ENCODE measurements at regions of chr3 and their contacts with region 1.

Region 1: GRCh38 chr3:152241142-152242017 is 27.3 kb upstream of the MBNL1 start:
- DNase-seq: peak; percentile 38
- ATAC-seq: no peak
- H3K4me3 ChIP-seq: peak overlapping the region in 1 of 5 experiments; percentile 30
- H3K4me3 Mint-ChIP-seq: peak overlapping the region; percentile 68
- H3K27ac ChIP-seq: peak overlapping the region; percentile 57 to 87
- H3K27ac Mint-ChIP-seq: peak overlapping the region; percentile 84
- H3K4me1 ChIP-seq: peaks cover 38 to 53% of the 10 kb centered on the region in 2 donors
- H3K4me1 Mint-ChIP-seq: peaks cover 68% of the 10 kb centered on the region
- H3K27me3 ChIP-seq: no peaks in the 10 kb centered on the region
- H3K27me3 Mint-ChIP-seq: no peaks in the 10 kb centered on the region
- CTCF ChIP-seq: no peak

Region 2: GRCh38 chr3:152193673-152194267 is 47.6 kb before region 1 on chr3:
- CTCF ChIA-PET with region 1: interaction called, 7 read pairs
- POLR2A ChIA-PET with region 1: interaction called, 21 read pairs
- intact Hi-C with region 1: loop called (anchors 2 kb)
- DNase-seq: peak; percentile 57
- ATAC-seq: peak; percentile 52
- H3K4me3 ChIP-seq: peak overlapping the region; percentile 13 to 73 (median 51)
- H3K4me3 Mint-ChIP-seq: peak overlapping the region; percentile 91
- H3K27ac ChIP-seq: peak overlapping the region; percentile 27 to 59
- H3K27ac Mint-ChIP-seq: peak overlapping the region; percentile 91
- H3K4me1 ChIP-seq: peaks cover 48 to 53% of the 10 kb centered on the region in 2 donors
- H3K4me1 Mint-ChIP-seq: peaks cover 66% of the 10 kb centered on the region
- H3K27me3 ChIP-seq: no peaks in the 10 kb centered on the region
- H3K27me3 Mint-ChIP-seq: no peaks in the 10 kb centered on the region
- CTCF ChIP-seq: no peak

Region 3: DNA sequence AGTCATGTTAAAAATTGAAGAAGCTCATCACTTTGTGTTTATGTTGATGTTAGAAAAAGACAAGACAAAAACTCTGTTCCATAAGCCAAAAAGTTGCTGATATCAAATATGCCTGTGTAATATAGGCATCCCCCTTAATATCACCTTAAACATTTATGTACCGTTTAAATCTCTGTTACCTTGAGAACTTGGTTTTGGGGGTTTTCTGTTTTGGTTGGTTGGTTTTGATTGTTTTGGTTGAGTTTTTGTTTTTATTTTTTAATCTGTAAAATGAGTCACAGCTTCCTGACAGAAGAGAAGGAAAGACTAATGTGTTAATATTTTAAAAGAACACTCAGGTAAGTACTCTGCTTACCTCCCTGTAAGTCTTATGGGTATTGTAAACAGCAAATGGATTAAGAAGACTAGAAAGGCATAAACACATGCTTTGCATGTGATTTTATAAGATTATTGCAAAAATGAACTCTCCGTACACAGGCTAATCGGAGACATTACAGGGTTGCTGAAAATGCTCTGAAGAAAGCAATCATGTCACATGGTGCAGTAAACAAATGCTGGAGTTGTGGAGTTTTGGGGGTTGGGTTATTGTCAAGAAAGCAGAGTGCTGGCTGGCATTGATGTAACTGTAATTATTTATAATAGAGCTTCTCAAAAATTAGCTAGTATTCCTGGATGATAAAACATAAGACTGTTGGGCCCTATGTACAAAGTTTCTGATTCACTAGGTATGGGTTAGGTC is 42.1 kb before region 1 on chr3:
- CTCF ChIA-PET with region 1: interaction called, 14 read pairs
- POLR2A ChIA-PET with region 1: interaction called, 21 read pairs
- intact Hi-C with region 1: loop called (anchors 2 kb)
- DNase-seq: peak; percentile 60
- ATAC-seq: peak; percentile 19
- H3K4me3 ChIP-seq: peak overlapping the region; percentile 16 to 69 (median 35)
- H3K4me3 Mint-ChIP-seq: peak overlapping the region; percentile 85
- H3K27ac ChIP-seq: peak overlapping the region; percentile 78 to 92
- H3K27ac Mint-ChIP-seq: peak overlapping the region; percentile 94
- H3K4me1 ChIP-seq: peaks cover 54 to 72% of the 10 kb centered on the region in 2 donors
- H3K4me1 Mint-ChIP-seq: peaks cover 71% of the 10 kb centered on the region
- H3K27me3 ChIP-seq: no peaks in the 10 kb centered on the region
- H3K27me3 Mint-ChIP-seq: no peaks in the 10 kb centered on the region
- CTCF ChIP-seq: no peak

Region 4: DNA sequence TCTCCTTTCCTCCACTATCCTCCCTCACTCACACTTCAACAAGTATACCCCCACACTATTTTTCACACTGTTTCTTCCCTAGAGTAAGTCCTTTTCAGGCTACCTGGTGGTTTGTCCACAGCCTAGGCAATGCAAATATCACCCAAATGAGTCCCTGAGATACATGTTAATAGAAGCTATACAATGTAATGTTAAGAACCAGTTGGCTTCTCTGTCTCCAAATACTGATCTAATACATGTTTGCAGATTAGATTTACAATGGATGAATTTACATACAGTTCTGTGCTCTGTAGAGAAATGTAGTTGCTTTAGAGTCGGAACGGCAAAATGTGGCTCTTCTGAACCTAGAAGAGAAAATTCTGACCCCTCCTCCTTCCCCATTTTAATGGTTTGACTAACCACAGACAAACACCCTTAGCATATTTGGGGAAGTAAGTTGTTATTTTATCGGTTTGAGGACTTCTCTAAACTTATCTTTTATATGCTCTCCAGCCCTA is 36.2 kb before region 1 on chr3:
- CTCF ChIA-PET with region 1: interaction called, 14 read pairs
- POLR2A ChIA-PET with region 1: interaction called, 21 read pairs
- intact Hi-C with region 1: loop called (anchors 1 kb)
- DNase-seq: peak; percentile 87
- ATAC-seq: peak; percentile 82
- H3K4me3 ChIP-seq: peak overlapping the region; percentile 66 to 97 (median 72)
- H3K4me3 Mint-ChIP-seq: peak overlapping the region; percentile 95
- H3K27ac ChIP-seq: peak overlapping the region; percentile 83 to 92
- H3K27ac Mint-ChIP-seq: peak overlapping the region; percentile 96
- H3K4me1 ChIP-seq: peaks cover 21 to 40% of the 10 kb centered on the region in 2 donors
- H3K4me1 Mint-ChIP-seq: peaks cover 46% of the 10 kb centered on the region
- H3K27me3 ChIP-seq: no peaks in the 10 kb centered on the region
- H3K27me3 Mint-ChIP-seq: no peaks in the 10 kb centered on the region
- CTCF ChIP-seq: no peak

Region 5: DNA sequence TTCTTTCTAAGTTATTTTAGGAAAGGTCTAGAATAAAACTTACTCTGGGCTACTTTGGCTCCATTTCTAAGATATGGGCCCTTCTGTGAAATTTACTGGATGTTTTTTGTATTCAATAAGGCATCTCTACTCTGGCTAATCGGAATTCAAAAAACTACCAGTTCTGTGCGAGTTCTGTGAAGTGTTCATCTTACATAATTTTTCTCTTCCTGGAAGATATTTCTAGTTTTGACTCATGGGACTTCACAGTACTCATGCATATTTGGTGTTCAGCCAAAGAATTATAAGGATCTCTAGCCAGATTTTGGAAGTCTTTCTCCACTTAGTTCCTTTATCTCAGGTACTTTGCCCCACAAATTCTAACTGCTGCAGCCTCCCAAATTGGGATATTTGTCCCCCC is 19.1 kb before region 1 on chr3:
- CTCF ChIA-PET with region 1: interaction called, 3 read pairs
- POLR2A ChIA-PET with region 1: interaction called, 6 read pairs
- intact Hi-C with region 1: loop called (anchors 2 kb)
- DNase-seq: no peak
- ATAC-seq: no peak
- H3K4me3 ChIP-seq: no peak overlapping the region
- H3K4me3 Mint-ChIP-seq: peak overlapping the region; percentile 51
- H3K27ac ChIP-seq: peak overlapping the region in 1 of 2 donors; percentile 39
- H3K27ac Mint-ChIP-seq: peak overlapping the region; percentile 78
- H3K4me1 ChIP-seq: peaks cover 26 to 56% of the 10 kb centered on the region in 2 donors
- H3K4me1 Mint-ChIP-seq: peaks cover 59% of the 10 kb centered on the region
- H3K27me3 ChIP-seq: no peaks in the 10 kb centered on the region
- H3K27me3 Mint-ChIP-seq: no peaks in the 10 kb centered on the region
- CTCF ChIP-seq: no peak

Region 6: GRCh38 chr3:152252755-152253154 is 11.4 kb after region 1 on chr3:
- CTCF ChIA-PET with region 1: interaction called, 38 read pairs
- POLR2A ChIA-PET with region 1: interaction called, 15 read pairs
- intact Hi-C with region 1: loop called (anchors 1 kb)
- DNase-seq: no peak
- ATAC-seq: no peak
- H3K4me3 ChIP-seq: no peak overlapping the region
- H3K4me3 Mint-ChIP-seq: peak overlapping the region; percentile 48
- H3K27ac ChIP-seq: peak overlapping the region; percentile 59 to 77
- H3K27ac Mint-ChIP-seq: peak overlapping the region; percentile 84
- H3K4me1 ChIP-seq: peaks cover 53 to 61% of the 10 kb centered on the region in 2 donors
- H3K4me1 Mint-ChIP-seq: peaks cover 61% of the 10 kb centered on the region
- H3K27me3 ChIP-seq: no peaks in the 10 kb centered on the region
- H3K27me3 Mint-ChIP-seq: no peaks in the 10 kb centered on the region
- CTCF ChIP-seq: no peak

Region 7: DNA sequence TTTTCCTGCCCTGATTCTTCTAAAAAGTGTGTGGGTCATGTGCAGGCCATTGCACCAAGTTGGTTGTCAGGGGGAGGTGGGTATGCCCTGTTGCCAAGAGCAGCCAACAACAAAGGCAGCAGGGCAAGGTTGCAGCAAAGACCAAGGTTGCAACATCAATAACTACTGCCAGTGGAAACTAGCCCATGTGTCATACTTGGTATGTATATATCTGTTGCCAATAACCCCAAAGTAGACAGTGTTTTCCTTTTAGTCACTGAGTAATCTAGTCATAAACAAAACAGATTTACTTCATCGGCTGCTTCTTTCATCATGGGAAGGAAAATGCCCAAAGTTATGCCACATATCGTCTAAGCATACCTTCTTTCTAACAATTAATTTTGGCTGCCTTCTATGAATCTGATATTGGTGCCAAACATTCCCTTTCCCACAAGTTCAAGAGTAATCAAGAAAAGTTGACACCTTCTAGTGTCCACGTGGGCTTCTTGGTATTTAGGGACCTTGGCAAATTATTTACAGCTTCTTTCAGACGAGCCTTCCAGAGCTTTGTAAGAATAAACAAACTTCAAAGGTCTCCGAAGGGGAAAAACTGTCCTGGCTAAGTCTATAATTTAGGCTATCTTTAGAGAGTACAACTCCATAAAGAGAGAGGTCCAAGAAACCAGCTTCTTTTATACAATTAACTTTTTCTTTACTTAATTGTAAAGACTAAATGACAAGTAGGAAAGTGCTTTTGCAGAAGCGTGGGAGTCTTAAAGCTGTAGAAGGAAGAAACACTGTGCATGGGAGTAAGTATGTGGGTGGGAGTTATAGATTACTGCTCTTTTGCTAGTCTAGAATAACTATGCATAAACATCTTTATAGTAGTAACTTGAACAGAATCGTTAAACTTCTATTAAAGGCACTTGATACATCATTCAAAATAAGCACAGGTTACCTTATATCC is 17.3 kb after region 1 on chr3:
- CTCF ChIA-PET with region 1: interaction called, 38 read pairs
- POLR2A ChIA-PET with region 1: interaction called, 15 read pairs
- intact Hi-C with region 1: loop called (anchors 1 kb)
- DNase-seq: no peak
- ATAC-seq: peak; percentile 10
- H3K4me3 ChIP-seq: peak overlapping the region in 1 of 5 experiments; percentile 23
- H3K4me3 Mint-ChIP-seq: peak overlapping the region; percentile 72
- H3K27ac ChIP-seq: peak overlapping the region; percentile 22 to 59
- H3K27ac Mint-ChIP-seq: peak overlapping the region; percentile 89
- H3K4me1 ChIP-seq: peaks cover 62 to 65% of the 10 kb centered on the region in 2 donors
- H3K4me1 Mint-ChIP-seq: peaks cover 71% of the 10 kb centered on the region
- H3K27me3 ChIP-seq: no peaks in the 10 kb centered on the region
- H3K27me3 Mint-ChIP-seq: no peaks in the 10 kb centered on the region
- CTCF ChIP-seq: no peak

Region 8: GRCh38 chr3:152281133-152281713 is 39.8 kb after region 1 on chr3:
- CTCF ChIA-PET with region 1: no interaction called
- POLR2A ChIA-PET with region 1: no interaction called
- intact Hi-C with region 1: no loop called
- DNase-seq: no peak
- ATAC-seq: no peak
- H3K4me3 ChIP-seq: peak overlapping the region in 1 of 5 experiments; percentile 5
- H3K4me3 Mint-ChIP-seq: peak overlapping the region; percentile 68
- H3K27ac ChIP-seq: peak overlapping the region in 1 of 2 donors; percentile 73
- H3K27ac Mint-ChIP-seq: peak overlapping the region; percentile 62
- H3K4me1 ChIP-seq: peaks cover 63 to 90% of the 10 kb centered on the region in 2 donors
- H3K4me1 Mint-ChIP-seq: peaks cover 79% of the 10 kb centered on the region
- H3K27me3 ChIP-seq: no peaks in the 10 kb centered on the region
- H3K27me3 Mint-ChIP-seq: no peaks in the 10 kb centered on the region
- CTCF ChIP-seq: no peak

Measured in B cell (primary cell).